Left ventricle myocardium superior (tissue), 1 donor: ENCODE measurements at regions of chr3 and their contacts with region 1.

Region 1: DNA sequence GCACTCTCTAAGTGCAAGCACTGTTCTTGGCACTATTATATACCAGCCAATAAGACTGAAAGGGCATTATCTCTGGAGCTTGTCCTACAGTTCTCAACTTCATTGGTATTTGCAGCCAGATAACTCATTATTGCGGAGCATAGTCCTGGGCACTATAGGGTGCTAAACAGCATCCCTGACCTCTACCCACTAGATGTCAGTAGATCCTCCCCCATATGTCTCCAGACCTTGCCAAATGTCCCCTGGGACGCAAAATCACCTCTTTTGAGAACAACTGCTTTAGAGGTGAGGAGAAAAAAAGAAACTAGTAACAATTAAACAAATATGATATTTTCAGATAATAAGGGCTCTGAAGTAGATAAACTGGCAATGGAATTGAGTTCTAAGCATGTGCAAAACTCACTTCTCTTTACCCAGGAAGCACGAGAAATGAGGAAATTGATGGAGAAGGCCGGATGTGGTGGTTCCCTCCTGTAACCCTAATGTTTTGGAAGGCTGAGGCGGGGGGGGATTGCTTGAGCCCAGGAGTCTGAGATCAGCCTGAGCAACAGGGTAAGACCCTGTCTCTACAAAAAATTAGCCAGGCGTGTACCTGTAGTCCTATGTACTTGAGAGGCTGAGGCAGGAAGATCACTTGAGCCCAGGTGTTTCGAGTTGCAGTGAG is 61.4 kb downstream of the FRMD4B start:
- DNase-seq: no peak
- ATAC-seq: peak; percentile 32

Region 2: GRCh38 chr3:69410250-69410649 is 85.8 kb after region 1 on chr3:
- intact Hi-C with region 1: loop called (anchors 5 kb)
- DNase-seq: peak; percentile 49
- ATAC-seq: peak; percentile 84

Region 3: GRCh38 chr3:69671082-69671952 is 346.8 kb after region 1 on chr3:
- intact Hi-C with region 1: loop called (anchors 10 kb)
- DNase-seq: no peak
- ATAC-seq: peak; percentile 78